ENCODE measurements at regions of chr1 and their contacts with region 1.

Region 1: DNA sequence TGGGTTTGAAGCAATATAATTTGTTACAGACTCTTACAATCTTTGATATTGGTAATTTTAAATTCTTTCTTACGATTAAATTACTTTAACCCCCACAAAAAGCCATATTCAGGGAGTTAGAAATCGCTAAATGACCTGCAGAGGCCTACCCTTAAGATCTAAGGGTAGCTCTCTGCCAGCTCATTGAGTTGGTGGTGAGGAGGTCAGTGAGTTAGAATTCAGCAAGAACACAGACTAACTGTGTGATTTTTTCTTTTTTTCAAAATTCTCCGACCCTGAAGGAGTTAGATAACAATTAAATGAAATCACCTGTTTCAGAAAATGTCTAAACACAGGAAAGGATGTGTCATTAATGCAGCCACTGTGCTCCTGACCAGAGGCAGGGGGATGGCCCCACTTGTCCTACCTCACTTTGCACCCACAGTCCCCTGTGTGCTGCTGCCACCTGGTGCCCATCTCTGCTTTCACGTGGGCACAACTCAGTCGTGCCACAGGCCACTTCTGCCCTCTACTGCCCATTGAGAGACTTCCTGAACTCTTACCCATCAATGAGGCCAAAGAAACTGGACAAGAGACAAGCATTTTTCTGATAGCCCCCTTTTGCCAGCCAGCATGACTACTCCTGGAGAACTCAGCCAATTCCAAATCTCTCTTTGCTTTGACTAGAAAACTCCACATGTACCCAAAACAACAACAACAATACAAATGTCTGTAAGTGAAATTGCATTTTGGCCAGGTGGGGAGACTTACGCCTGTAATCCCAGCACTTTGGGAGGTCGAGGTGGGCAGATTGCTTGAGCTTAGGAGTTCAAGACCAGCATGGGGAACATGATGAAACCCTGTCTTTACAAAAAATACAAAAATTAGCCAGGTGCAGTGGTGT is 8.4 kb downstream of the CFAP45 start:
- DNase-seq: peak; percentile 84 to 93 (median 92)
- ATAC-seq: peak; percentile 79 to 88
- H3K4me3 ChIP-seq: no peak overlapping the region
- H3K27ac ChIP-seq: no peak overlapping the region
- H3K4me1 ChIP-seq: peaks cover 6% of the 10 kb centered on the region
- H3K27me3 ChIP-seq: no peaks in the 10 kb centered on the region

Region 2: GRCh38 chr1:159339536-159339935 is 552.0 kb before region 1 on chr1:
- intact Hi-C with region 1: no loop called
- DNase-seq: no peak
- ATAC-seq: no peak
- H3K4me3 ChIP-seq: no peak overlapping the region
- H3K27ac ChIP-seq: no peak overlapping the region
- H3K4me1 ChIP-seq: no peaks in the 10 kb centered on the region
- H3K27me3 ChIP-seq: no peaks in the 10 kb centered on the region

Region 3: GRCh38 chr1:159780583-159781582 is 110.6 kb before region 1 on chr1 and contains the start of gene DUSP23:
- intact Hi-C with region 1: loop called in 1 of 4 experiments (anchors 5 kb)
- DNase-seq: peak; percentile 98 to 99 (median 99)
- ATAC-seq: peak; percentile 98 to 99
- H3K4me3 ChIP-seq: peak within 1 kb of the TSS; percentile 53
- H3K27ac ChIP-seq: peak within 1 kb of the TSS; percentile 71
- H3K4me1 ChIP-seq: peaks cover 2% of the 10 kb centered on the region
- H3K27me3 ChIP-seq: no peaks in the 10 kb centered on the region
- total RNA-seq, gene DUSP23: 20.7 to 27.8 (median 23.3) TPM

Region 4: GRCh38 chr1:159839116-159839849 is 52.2 kb before region 1 on chr1:
- intact Hi-C with region 1: no loop called
- DNase-seq: no peak
- ATAC-seq: no peak
- H3K4me3 ChIP-seq: no peak overlapping the region
- H3K27ac ChIP-seq: no peak overlapping the region
- H3K4me1 ChIP-seq: no peaks in the 10 kb centered on the region
- H3K27me3 ChIP-seq: no peaks in the 10 kb centered on the region